Colonic mucosa (tissue), 4 donors: ENCODE measurements at regions of chr12 and their contacts with region 1.

Region 1: DNA sequence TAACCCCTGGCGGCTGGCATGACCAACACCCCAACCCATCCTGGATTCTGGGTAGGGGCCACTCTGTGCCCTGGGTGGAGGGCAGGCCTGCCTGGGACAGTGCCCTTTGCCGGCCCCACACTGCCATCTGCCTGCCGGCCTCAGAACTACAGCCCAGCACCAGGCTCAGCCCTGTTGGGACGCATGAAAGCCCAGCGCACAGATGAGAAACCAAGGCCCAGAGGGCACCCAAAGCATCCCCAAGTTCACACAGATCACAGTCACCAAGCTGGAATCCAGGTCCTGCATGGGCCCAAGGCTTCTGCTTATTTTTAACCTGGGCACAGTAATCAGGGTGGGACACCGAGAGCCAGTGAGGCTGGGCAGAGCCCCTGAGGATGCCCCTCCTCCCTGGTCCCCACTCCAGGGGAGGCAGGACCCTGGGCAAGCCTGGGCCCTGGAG is 26.2 kb downstream of the RFLNA start:
- DNase-seq: peak; percentile 81
- H3K4me3 ChIP-seq: no peak overlapping the region
- H3K27ac ChIP-seq: no peak overlapping the region
- H3K4me1 ChIP-seq: no peaks in the 10 kb centered on the region
- H3K27me3 ChIP-seq: no peaks in the 10 kb centered on the region
- CTCF ChIP-seq: peak; percentile 97

Region 2: DNA sequence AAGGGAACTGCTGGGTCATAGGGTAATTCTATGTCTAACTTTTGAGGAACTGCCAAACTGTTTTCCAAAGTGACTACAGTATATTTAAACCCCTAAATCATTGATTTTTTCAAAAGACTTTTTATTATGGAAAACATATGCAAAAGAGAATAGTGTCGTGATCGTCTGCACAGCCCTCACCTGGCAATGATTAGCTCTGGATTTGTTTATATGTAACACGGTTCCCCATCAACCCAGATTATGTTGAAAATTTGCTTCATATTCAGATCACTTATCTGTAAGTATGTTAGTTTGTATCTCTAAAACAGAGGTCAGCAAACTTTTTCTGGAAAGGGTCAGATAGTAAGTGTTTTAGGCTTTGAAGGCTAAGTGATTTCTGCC is 401.1 kb before region 1 on chr12:
- intact Hi-C with region 1: no loop called
- DNase-seq: no peak
- H3K4me3 ChIP-seq: no peak overlapping the region
- H3K27ac ChIP-seq: no peak overlapping the region
- H3K4me1 ChIP-seq: no peaks in the 10 kb centered on the region
- H3K27me3 ChIP-seq: no peaks in the 10 kb centered on the region
- CTCF ChIP-seq: no peak

Region 3: DNA sequence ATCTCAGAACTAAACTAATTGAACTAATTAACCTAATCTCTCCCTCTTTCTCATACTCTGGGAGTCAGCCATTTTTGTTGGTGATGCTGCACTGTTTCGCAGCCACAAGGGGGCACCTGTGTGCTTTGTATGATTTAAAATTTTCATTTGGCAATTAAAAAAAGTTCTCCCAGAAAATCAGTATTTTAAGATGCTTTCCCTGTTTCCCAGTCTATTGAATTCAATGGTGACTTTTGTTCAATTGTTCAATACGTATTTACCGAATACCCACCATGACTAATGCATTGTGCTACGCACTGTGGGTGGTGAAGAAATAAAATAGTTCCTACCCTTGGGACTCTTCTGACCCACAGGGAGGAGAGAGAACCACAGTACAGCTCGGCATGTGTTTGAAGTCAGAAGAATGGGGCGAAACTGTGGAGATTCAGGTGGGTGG is 284.4 kb before region 1 on chr12:
- intact Hi-C with region 1: loop called (anchors 5 kb)
- DNase-seq: peak; percentile 32
- H3K4me3 ChIP-seq: no peak overlapping the region
- H3K27ac ChIP-seq: no peak overlapping the region
- H3K4me1 ChIP-seq: no peaks in the 10 kb centered on the region
- H3K27me3 ChIP-seq: no peaks in the 10 kb centered on the region
- CTCF ChIP-seq: peak; percentile 95

Region 4: GRCh38 chr12:124053851-124054250 is 267.2 kb before region 1 on chr12:
- intact Hi-C with region 1: loop called (anchors 5 kb)
- DNase-seq: no peak
- H3K4me3 ChIP-seq: no peak overlapping the region
- H3K27ac ChIP-seq: no peak overlapping the region
- H3K4me1 ChIP-seq: no peaks in the 10 kb centered on the region
- H3K27me3 ChIP-seq: no peaks in the 10 kb centered on the region
- CTCF ChIP-seq: peak; percentile 45

Region 5: DNA sequence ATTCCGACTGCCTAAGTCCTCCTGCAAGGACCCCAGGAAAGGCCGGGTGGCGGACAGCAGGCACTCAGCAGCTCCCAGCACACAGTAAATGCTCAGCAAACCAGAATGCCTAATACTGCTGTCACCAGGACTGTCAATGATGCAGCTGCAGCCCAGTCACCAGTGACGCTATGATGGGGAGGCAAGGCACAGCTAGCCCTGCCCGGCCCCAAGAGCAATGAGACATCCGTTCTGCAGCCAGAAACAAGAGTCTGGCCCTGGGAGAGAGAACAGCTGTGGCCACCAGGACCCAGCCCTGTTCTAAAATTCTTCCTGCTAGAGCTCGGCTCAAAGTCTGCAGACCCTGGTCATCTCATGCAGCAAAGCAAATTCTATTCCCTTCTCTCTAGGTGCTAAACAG is 176.6 kb after region 1 on chr12:
- intact Hi-C with region 1: no loop called
- DNase-seq: no peak
- H3K4me3 ChIP-seq: no peak overlapping the region
- H3K27ac ChIP-seq: peak overlapping the region; percentile 36
- H3K4me1 ChIP-seq: peaks cover 7% of the 10 kb centered on the region
- H3K27me3 ChIP-seq: no peaks in the 10 kb centered on the region
- CTCF ChIP-seq: no peak